ENCODE measurements at regions of chr10 and their contacts with region 1.

Region 1: DNA sequence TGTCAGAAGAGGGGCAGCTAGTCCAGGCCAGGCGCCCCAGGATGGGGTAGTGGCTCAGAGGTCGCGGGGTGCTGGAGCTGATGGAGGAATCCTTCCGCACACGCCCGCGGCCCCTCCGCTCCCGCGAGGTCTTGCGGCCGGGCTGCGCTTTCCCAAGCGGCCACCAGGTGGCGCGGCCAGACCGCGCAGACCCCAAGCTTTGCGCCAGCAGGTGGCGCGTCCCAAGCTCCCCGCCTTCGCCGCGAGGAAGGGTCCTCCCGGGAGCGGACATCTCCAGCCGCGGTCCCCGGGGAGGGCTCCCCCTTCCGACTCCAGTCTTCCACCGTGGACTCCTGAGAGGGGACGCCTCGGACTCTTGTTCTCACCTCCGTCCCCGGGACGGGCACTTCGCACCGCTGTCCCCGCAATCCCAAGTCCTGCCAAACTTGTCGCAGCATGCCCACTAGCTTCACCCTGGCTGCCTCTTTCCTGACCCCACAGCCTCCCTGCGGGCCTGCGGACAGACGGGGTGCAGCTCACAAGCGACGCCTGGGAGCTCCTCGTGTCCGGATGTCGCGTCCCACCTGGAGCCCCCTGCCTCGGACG is 19.4 kb downstream of the KCNK18 start:
- DNase-seq: peak; percentile 72
- ATAC-seq: peak; percentile 91
- H3K4me3 Mint-ChIP-seq: peak overlapping the region; percentile 70
- H3K27ac Mint-ChIP-seq: no peak overlapping the region
- H3K4me1 Mint-ChIP-seq: peaks cover 7% of the 10 kb centered on the region
- H3K27me3 Mint-ChIP-seq: peaks cover 30% of the 10 kb centered on the region
- CTCF ChIP-seq: peak; percentile 99

Region 2: GRCh38 chr10:117174439-117175214 is 42.1 kb before region 1 on chr10:
- CTCF ChIA-PET with region 1: interaction called, 11 read pairs
- POLR2A ChIA-PET with region 1: no interaction called
- intact Hi-C with region 1: no loop called
- DNase-seq: peak; percentile 93
- ATAC-seq: peak; percentile 86
- H3K4me3 Mint-ChIP-seq: peak overlapping the region; percentile 66
- H3K27ac Mint-ChIP-seq: no peak overlapping the region
- H3K4me1 Mint-ChIP-seq: peaks cover 17% of the 10 kb centered on the region
- H3K27me3 Mint-ChIP-seq: peaks cover 28% of the 10 kb centered on the region
- CTCF ChIP-seq: peak; percentile 77

Region 3: DNA sequence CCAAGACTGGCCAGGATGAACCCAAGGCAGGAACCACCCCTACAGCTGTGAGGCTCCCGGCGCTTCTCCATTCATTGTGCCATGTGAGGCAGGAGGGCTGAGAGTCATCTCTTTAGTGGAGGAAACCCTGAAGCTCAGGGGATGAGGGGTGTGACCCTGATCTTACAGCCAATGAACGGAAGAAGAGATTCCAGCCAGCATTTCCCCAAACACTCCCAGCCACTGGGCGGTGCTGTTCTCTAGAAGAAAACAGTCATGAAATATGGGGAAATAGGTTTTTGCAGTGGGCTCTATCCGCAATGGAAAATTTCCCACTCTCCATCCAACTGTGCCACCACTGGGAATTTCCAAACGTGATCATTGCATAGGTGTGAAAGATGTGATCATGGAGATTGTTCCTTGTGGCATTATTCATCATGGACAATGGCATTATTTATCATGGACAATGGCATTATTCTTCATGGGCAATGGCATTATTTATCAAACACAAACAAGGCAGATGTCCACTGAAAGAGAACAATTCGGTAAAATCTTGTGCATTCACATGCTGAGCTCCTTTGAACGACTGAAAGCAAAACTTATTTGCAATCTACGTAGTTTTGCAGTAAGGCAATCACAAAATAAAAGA is 10.2 kb after region 1 on chr10:
- CTCF ChIA-PET with region 1: interaction called, 28 read pairs
- POLR2A ChIA-PET with region 1: no interaction called
- intact Hi-C with region 1: no loop called
- DNase-seq: peak; percentile 40
- ATAC-seq: peak; percentile 37
- H3K4me3 Mint-ChIP-seq: no peak overlapping the region
- H3K27ac Mint-ChIP-seq: no peak overlapping the region
- H3K4me1 Mint-ChIP-seq: no peaks in the 10 kb centered on the region
- H3K27me3 Mint-ChIP-seq: peaks cover 15% of the 10 kb centered on the region
- CTCF ChIP-seq: peak; percentile 42

Region 4: GRCh38 chr10:117266400-117266799 is 49.7 kb after region 1 on chr10:
- CTCF ChIA-PET with region 1: interaction called, 14 read pairs
- POLR2A ChIA-PET with region 1: no interaction called
- intact Hi-C with region 1: no loop called
- DNase-seq: no peak
- ATAC-seq: no peak
- H3K4me3 Mint-ChIP-seq: no peak overlapping the region
- H3K27ac Mint-ChIP-seq: no peak overlapping the region
- H3K4me1 Mint-ChIP-seq: no peaks in the 10 kb centered on the region
- H3K27me3 Mint-ChIP-seq: peaks cover 2% of the 10 kb centered on the region
- CTCF ChIP-seq: no peak

Region 5: GRCh38 chr10:117312430-117312829 is 95.7 kb after region 1 on chr10:
- CTCF ChIA-PET with region 1: interaction called, 124 read pairs
- POLR2A ChIA-PET with region 1: interaction called, 3 read pairs
- intact Hi-C with region 1: no loop called
- DNase-seq: no peak
- ATAC-seq: no peak
- H3K4me3 Mint-ChIP-seq: no peak overlapping the region
- H3K27ac Mint-ChIP-seq: no peak overlapping the region
- H3K4me1 Mint-ChIP-seq: peaks cover 28% of the 10 kb centered on the region
- H3K27me3 Mint-ChIP-seq: no peaks in the 10 kb centered on the region
- CTCF ChIP-seq: no peak

Region 6: GRCh38 chr10:117342641-117343040 is 125.9 kb after region 1 on chr10:
- CTCF ChIA-PET with region 1: interaction called, 11 read pairs
- POLR2A ChIA-PET with region 1: no interaction called
- intact Hi-C with region 1: no loop called
- DNase-seq: no peak
- ATAC-seq: no peak
- H3K4me3 Mint-ChIP-seq: no peak overlapping the region
- H3K27ac Mint-ChIP-seq: no peak overlapping the region
- H3K4me1 Mint-ChIP-seq: peaks cover 36% of the 10 kb centered on the region
- H3K27me3 Mint-ChIP-seq: no peaks in the 10 kb centered on the region
- CTCF ChIP-seq: no peak

Region 7: GRCh38 chr10:117449636-117450035 is 232.9 kb after region 1 on chr10:
- CTCF ChIA-PET with region 1: interaction called, 21 read pairs
- POLR2A ChIA-PET with region 1: no interaction called
- intact Hi-C with region 1: no loop called
- DNase-seq: no peak
- ATAC-seq: no peak
- H3K4me3 Mint-ChIP-seq: no peak overlapping the region
- H3K27ac Mint-ChIP-seq: no peak overlapping the region
- H3K4me1 Mint-ChIP-seq: no peaks in the 10 kb centered on the region
- H3K27me3 Mint-ChIP-seq: peaks cover 24% of the 10 kb centered on the region
- CTCF ChIP-seq: no peak

Measured in activated CD8-positive, alpha-beta T cell treated with anti-CD3 and anti-CD28 coated beads for 36 hours (primary cell).